ENCODE measurements at regions of chr14 and their contacts with region 1.

Region 1: GRCh38 chr14:20454516-20455354 is at the starts of genes APEX1 and OSGEP:
- DNase-seq: peak; percentile 99
- ATAC-seq: peak; percentile 86
- H3K4me3 ChIP-seq: peak within 1 kb of the TSS; percentile 82
- H3K27ac ChIP-seq: peak within 1 kb of the TSS; percentile 93
- H3K4me1 ChIP-seq: peaks cover 14% of the 10 kb centered on the region
- H3K27me3 ChIP-seq: no peaks in the 10 kb centered on the region
- CTCF ChIP-seq: no peak
- total RNA-seq, gene APEX1: 147 and 189 TPM in 2 replicates
- total RNA-seq, gene OSGEP: 57.7 and 64.1 TPM in 2 replicates

Region 2: DNA sequence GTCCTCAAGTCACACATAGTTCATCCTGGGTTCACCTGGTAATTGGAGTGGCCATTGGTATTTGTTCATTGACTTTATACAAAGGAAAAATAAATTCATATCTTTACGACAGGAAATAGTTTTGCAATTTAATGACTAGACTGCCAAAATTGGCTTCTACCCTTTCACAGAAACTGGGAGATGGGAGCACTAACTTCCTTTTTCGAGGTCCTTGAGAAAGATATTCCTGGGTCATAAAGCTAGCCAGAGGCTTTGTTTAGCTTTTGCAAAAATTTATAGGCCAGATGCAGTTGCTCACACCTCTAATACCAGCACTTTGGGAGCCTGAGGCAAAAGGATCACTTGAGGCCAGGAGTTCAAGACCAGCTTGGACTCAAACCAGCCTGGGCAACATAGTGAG is 274.2 kb before region 1 on chr14:
- CTCF ChIA-PET with region 1: no interaction called
- POLR2A ChIA-PET with region 1: no interaction called
- intact Hi-C with region 1: no loop called
- DNase-seq: peak; percentile 21
- ATAC-seq: no peak
- H3K4me3 ChIP-seq: no peak overlapping the region
- H3K27ac ChIP-seq: no peak overlapping the region
- H3K4me1 ChIP-seq: no peaks in the 10 kb centered on the region
- H3K27me3 ChIP-seq: peaks cover 7% of the 10 kb centered on the region; the same call in 1 of the 2 replicates
- CTCF ChIP-seq: no peak

Region 3: GRCh38 chr14:20365928-20366327 is 88.8 kb before region 1 on chr14:
- CTCF ChIA-PET with region 1: no interaction called
- POLR2A ChIA-PET with region 1: no interaction called
- intact Hi-C with region 1: no loop called
- DNase-seq: no peak
- ATAC-seq: no peak
- H3K4me3 ChIP-seq: no peak overlapping the region
- H3K27ac ChIP-seq: no peak overlapping the region
- H3K4me1 ChIP-seq: no peaks in the 10 kb centered on the region
- H3K27me3 ChIP-seq: no peaks in the 10 kb centered on the region
- CTCF ChIP-seq: no peak

Region 4: GRCh38 chr14:20606190-20606901 is 151.6 kb after region 1 on chr14:
- CTCF ChIA-PET with region 1: interaction called, 5 read pairs
- POLR2A ChIA-PET with region 1: no interaction called
- intact Hi-C with region 1: loop called (anchors 1 kb)
- DNase-seq: peak; percentile 72
- ATAC-seq: peak; percentile 37
- H3K4me3 ChIP-seq: no peak overlapping the region
- H3K27ac ChIP-seq: no peak overlapping the region
- H3K4me1 ChIP-seq: peaks cover 25% of the 10 kb centered on the region; the same call in 1 of the 2 replicates
- H3K27me3 ChIP-seq: no peaks in the 10 kb centered on the region
- CTCF ChIP-seq: peak; percentile 89